ENCODE measurements at regions of chr18 and their contacts with region 1.

Region 1: DNA sequence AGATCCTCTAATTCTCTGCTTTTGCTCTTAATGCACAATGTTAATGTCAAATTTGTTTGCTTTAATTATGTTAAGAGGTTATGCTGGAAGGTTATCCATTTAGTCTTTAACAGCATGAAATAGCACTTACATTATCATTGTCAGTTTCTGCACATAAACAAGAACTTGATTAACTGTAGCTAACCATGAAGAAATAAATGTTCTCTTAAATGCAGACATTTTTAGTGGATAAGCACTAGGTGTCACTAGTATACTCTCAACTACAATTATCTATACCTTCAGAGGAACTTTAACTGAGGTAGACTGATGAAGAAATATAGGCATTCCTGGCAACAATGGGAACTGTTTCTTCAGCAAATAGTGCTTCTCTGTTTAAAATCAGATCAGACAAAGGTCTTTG is 178.8 kb upstream of the CHST9 start:
- DNase-seq: no peak
- H3K4me3 Mint-ChIP-seq: no peak overlapping the region
- H3K27ac Mint-ChIP-seq: no peak overlapping the region
- H3K4me1 Mint-ChIP-seq: no peaks in the 10 kb centered on the region
- H3K27me3 Mint-ChIP-seq: no peaks in the 10 kb centered on the region
- CTCF ChIP-seq: peak; percentile 17

Region 2: DNA sequence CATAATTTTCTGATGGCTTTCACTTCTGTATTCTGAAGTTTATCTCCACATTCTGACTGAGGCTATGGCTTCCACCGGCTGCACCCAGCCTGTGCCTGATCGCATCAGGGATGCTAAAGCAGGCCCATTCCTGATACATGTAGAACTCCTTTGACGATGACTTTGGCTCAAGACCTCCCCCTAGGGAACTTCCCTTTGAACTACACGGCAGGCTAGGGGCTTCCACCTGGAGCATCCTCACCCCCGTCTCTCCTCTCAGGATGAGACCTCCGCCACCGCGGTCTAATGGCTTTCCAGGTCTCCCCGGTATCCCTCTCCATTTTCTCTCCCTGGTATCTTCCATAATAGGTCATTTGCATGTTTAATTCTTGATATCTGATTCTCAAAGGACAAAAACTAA is 36.1 kb after region 1 on chr18:
- CTCF ChIA-PET with region 1: no interaction called
- intact Hi-C with region 1: loop called (anchors 2 kb)
- DNase-seq: peak; percentile 37
- H3K4me3 Mint-ChIP-seq: no peak overlapping the region
- H3K27ac Mint-ChIP-seq: no peak overlapping the region
- H3K4me1 Mint-ChIP-seq: peaks cover 4% of the 10 kb centered on the region
- H3K27me3 Mint-ChIP-seq: no peaks in the 10 kb centered on the region
- CTCF ChIP-seq: peak; percentile 49

Region 3: GRCh38 chr18:27428120-27428519 is 64.2 kb after region 1 on chr18:
- CTCF ChIA-PET with region 1: interaction called, 13 read pairs
- intact Hi-C with region 1: loop called (anchors 1 kb)
- DNase-seq: peak; percentile 8
- H3K4me3 Mint-ChIP-seq: no peak overlapping the region
- H3K27ac Mint-ChIP-seq: no peak overlapping the region
- H3K4me1 Mint-ChIP-seq: peaks cover 9% of the 10 kb centered on the region
- H3K27me3 Mint-ChIP-seq: no peaks in the 10 kb centered on the region
- CTCF ChIP-seq: no peak

Region 4: GRCh38 chr18:27599202-27599829 is 235.4 kb after region 1 on chr18:
- CTCF ChIA-PET with region 1: interaction called, 16 read pairs
- intact Hi-C with region 1: loop called (anchors 1 kb)
- DNase-seq: peak; percentile 70
- H3K4me3 Mint-ChIP-seq: no peak overlapping the region
- H3K27ac Mint-ChIP-seq: no peak overlapping the region
- H3K4me1 Mint-ChIP-seq: peaks cover 3% of the 10 kb centered on the region
- H3K27me3 Mint-ChIP-seq: no peaks in the 10 kb centered on the region
- CTCF ChIP-seq: peak; percentile 82

Region 5: GRCh38 chr18:27750014-27750413 is 386.1 kb after region 1 on chr18:
- CTCF ChIA-PET with region 1: interaction called, 11 read pairs
- intact Hi-C with region 1: loop called (anchors 5 kb)
- DNase-seq: peak; percentile 74
- H3K4me3 Mint-ChIP-seq: no peak overlapping the region
- H3K27ac Mint-ChIP-seq: no peak overlapping the region
- H3K4me1 Mint-ChIP-seq: no peaks in the 10 kb centered on the region
- H3K27me3 Mint-ChIP-seq: no peaks in the 10 kb centered on the region
- CTCF ChIP-seq: peak; percentile 69